IMR-90 (cell line): ENCODE measurements at regions of chr2 and their contacts with region 1.

Region 1: DNA sequence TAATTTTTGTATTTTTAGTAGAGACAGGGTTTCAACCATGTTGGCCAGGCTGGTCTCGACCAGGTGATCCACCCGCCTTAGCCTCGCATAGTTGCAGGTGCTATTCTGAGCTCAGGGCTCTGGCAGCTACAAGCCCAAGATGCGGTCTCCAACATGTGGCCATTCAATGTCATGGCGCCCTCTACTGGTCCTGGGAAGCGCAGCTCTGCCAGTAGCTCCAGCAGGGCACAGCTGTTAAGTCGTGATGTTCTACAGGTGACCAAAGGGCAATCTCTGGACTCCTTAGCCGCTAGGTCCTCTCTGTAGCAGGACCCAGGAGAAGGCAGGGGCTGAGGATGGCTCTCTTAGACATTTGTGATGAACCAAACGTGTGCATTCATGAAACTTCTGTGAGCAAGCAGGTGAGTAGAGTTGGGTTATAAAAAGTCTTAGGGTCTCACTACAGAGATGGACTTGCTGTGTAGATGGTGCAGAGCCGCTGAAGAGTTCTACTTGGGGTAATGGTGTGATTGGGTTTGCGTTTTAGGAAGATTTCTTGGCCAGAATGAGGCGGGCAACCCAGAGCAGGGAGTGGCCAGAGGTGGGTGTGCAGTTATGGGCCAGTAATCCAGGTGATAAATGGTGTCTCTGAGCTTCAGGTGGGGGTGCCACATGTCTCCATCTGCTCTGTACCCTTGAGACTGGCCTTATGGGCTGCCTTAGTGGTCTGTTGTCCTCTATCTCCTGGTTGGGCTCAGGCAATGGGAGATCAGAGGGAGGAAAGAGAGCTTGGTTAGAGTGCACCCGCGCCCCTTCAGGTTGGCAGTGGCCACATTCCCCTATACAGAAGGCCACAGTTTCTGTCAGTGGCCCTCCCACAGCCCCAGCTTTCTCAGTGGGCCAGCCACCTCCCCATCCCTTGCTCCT is 31.0 kb downstream of the IL37 start:
- DNase-seq: peak; percentile 76
- ATAC-seq: peak; percentile 95
- H3K4me3 ChIP-seq: no peak overlapping the region
- H3K27ac ChIP-seq: no peak overlapping the region
- H3K4me1 ChIP-seq: no peaks in the 10 kb centered on the region
- H3K27me3 ChIP-seq: peaks cover 13% of the 10 kb centered on the region
- CTCF ChIP-seq: peak; percentile 90
- POLR2A ChIP-seq: no peak
- RAD21 ChIP-seq: peak; percentile 92

Region 2: GRCh38 chr2:112529757-112530156 is 412.2 kb before region 1 on chr2:
- CTCF ChIA-PET with region 1: no interaction called
- POLR2A ChIA-PET with region 1: no interaction called
- dilution Hi-C with region 1: no loop called
- in situ Hi-C with region 1: no loop called
- intact Hi-C with region 1: no loop called
- DNase-seq: no peak
- ATAC-seq: no peak
- H3K4me3 ChIP-seq: no peak overlapping the region
- H3K27ac ChIP-seq: no peak overlapping the region
- H3K4me1 ChIP-seq: no peaks in the 10 kb centered on the region
- H3K27me3 ChIP-seq: no peaks in the 10 kb centered on the region
- CTCF ChIP-seq: no peak
- POLR2A ChIP-seq: no peak
- RAD21 ChIP-seq: no peak

Region 3: GRCh38 chr2:112626604-112627059 is 315.4 kb before region 1 on chr2:
- CTCF ChIA-PET with region 1: interaction called, 9 read pairs
- POLR2A ChIA-PET with region 1: no interaction called
- dilution Hi-C with region 1: no loop called
- in situ Hi-C with region 1: loop called (anchors 10 kb)
- intact Hi-C with region 1: loop called (anchors 10 kb)
- DNase-seq: peak; percentile 68
- ATAC-seq: peak; percentile 54
- H3K4me3 ChIP-seq: no peak overlapping the region; the same call in 1 of the 2 replicates
- H3K27ac ChIP-seq: peak overlapping the region; percentile 79
- H3K4me1 ChIP-seq: peaks cover 29% of the 10 kb centered on the region
- H3K27me3 ChIP-seq: no peaks in the 10 kb centered on the region
- CTCF ChIP-seq: peak; percentile 79
- POLR2A ChIP-seq: no peak; the same call in 1 of the 2 replicates
- RAD21 ChIP-seq: peak; percentile 86

Region 4: GRCh38 chr2:112726497-112727190 is 215.4 kb before region 1 on chr2:
- CTCF ChIA-PET with region 1: interaction called, 12 read pairs
- POLR2A ChIA-PET with region 1: no interaction called
- dilution Hi-C with region 1: no loop called
- in situ Hi-C with region 1: no loop called
- intact Hi-C with region 1: no loop called
- DNase-seq: peak; percentile 86
- ATAC-seq: peak; percentile 96
- H3K4me3 ChIP-seq: no peak overlapping the region
- H3K27ac ChIP-seq: no peak overlapping the region
- H3K4me1 ChIP-seq: peaks cover 1% of the 10 kb centered on the region; the same call in 1 of the 2 replicates
- H3K27me3 ChIP-seq: no peaks in the 10 kb centered on the region
- CTCF ChIP-seq: peak; percentile 99
- POLR2A ChIP-seq: peak; percentile 49; the same call in 1 of the 2 replicates
- RAD21 ChIP-seq: peak; percentile 100

Region 5: DNA sequence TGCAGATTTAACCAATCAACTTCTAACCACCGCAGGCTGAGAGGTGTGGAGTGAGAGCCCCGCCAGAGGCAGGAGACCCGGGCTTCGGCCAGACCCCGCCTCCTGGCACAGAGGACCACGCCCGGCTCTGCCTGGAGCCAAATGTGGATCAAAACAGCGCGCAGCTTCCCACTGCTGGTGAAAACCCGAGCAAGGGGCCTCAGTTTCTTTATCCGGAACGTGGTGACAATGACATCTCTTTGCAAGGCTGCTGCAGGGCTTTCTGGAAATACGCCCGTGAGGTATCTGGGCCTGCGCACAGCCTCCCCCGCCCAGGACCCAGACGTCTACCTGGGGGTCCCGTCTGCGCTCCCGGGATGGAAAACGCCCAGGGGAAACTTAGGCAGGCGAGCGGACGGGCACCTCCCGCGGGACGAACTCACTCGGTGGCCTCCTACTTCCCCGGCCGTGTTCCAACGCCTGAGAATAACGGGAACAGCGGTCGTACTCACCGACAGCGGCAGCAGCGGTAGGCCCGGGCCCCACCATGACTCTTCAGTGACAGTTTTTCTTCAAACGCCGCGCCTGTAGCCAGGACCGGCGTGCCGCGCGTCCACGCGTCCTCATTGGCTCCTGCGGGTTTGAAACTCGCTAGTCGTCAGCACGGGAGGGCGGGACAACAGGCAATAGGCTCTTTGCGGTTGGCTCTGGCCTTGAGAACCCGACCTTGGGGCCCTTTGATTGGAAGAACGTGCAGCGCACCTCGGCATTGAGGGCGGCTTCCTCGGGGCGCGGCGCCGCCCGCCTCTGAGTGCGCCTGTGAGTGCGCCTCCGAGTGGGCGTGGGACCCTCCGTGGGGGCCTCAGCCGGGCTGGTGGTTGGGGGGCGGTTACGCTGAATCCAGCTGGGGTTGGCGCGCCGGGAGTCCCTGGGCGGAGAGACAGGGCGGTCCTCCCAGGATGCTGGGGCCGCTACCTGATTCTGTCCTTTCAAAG is 177.6 kb before region 1 on chr2 and contains the start of gene CKAP2L:
- CTCF ChIA-PET with region 1: interaction called, 10 read pairs
- POLR2A ChIA-PET with region 1: no interaction called
- dilution Hi-C with region 1: no loop called
- in situ Hi-C with region 1: no loop called
- intact Hi-C with region 1: no loop called
- DNase-seq: peak; percentile 98
- ATAC-seq: peak; percentile 99
- H3K4me3 ChIP-seq: peak within 1 kb of the TSS; percentile 79
- H3K27ac ChIP-seq: peak within 1 kb of the TSS; percentile 54
- H3K4me1 ChIP-seq: no peaks in the 10 kb centered on the region; the same call in 1 of the 2 replicates
- H3K27me3 ChIP-seq: no peaks in the 10 kb centered on the region
- CTCF ChIP-seq: no peak
- POLR2A ChIP-seq: peak; percentile 31; the same call in 1 of the 2 replicates
- RAD21 ChIP-seq: no peak
- total RNA-seq, gene CKAP2L: 9.9 and 13.3 TPM in 2 replicates

Region 6: GRCh38 chr2:113080134-113080533 is 138.1 kb after region 1 on chr2:
- CTCF ChIA-PET with region 1: no interaction called
- POLR2A ChIA-PET with region 1: no interaction called
- dilution Hi-C with region 1: no loop called
- in situ Hi-C with region 1: no loop called
- intact Hi-C with region 1: no loop called
- DNase-seq: no peak
- ATAC-seq: peak; percentile 69
- H3K4me3 ChIP-seq: no peak overlapping the region
- H3K27ac ChIP-seq: no peak overlapping the region
- H3K4me1 ChIP-seq: no peaks in the 10 kb centered on the region
- H3K27me3 ChIP-seq: peaks cover 14% of the 10 kb centered on the region
- CTCF ChIP-seq: peak; percentile 49
- POLR2A ChIP-seq: no peak
- RAD21 ChIP-seq: peak; percentile 47